ENCODE measurements at regions of chr4 and their contacts with region 1.

Region 1: DNA sequence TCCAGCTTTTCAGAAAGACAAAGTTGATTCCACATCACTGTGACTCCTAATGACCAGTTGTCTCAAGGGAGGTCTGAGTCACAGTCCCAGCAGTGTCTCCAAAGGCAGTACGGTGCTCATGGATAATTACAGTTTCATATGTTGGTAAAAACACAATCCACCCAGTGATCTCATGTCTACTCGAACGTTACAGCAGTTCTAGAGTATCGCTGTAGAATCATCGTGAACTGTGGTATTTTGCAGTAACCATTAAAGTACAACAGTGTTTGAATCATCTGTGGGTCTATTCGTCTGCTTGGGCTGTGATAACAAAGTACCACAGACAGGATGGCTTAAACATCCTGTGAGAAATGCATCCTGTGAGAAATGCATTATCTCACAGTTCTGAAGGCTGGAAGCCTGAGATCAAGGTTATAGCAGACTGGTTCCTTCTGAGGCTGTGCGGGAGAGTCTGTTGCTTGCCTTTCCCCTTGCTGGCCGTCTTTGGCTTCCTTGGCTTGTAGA is 121.1 kb upstream of the SORBS2 start:
- DNase-seq: no peak

Region 2: GRCh38 chr4:185282968-185283367 is 650.2 kb before region 1 on chr4:
- intact Hi-C with region 1: no loop called
- DNase-seq: no peak

Region 3: GRCh38 chr4:185886832-185887524 is 46.2 kb before region 1 on chr4:
- intact Hi-C with region 1: no loop called
- DNase-seq: no peak

Region 4: DNA sequence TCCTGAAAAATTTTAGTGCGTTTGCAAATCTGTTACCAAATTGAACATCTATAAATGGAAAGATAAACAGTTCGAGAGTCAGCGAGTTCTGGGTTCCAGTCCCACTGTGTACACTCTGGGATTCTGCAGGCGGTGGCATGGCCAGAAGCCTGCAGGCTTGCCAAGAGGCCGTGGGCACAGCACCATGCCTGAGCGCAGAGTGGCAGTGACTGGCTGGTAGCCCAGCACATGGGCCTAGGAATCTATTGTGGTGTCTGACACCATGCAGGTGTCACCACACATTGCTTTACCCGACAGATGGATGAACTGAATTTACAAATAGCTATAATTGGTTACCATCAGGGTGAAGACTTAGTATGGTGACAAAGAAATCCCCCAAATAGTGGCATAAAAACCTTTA is 64.2 kb after region 1 on chr4:
- intact Hi-C with region 1: loop called (anchors 5 kb)
- DNase-seq: no peak

Measured in cardiac septum (tissue), 1 donor.